ENCODE measurements at regions of chr16 and their contacts with region 1.

Region 1: DNA sequence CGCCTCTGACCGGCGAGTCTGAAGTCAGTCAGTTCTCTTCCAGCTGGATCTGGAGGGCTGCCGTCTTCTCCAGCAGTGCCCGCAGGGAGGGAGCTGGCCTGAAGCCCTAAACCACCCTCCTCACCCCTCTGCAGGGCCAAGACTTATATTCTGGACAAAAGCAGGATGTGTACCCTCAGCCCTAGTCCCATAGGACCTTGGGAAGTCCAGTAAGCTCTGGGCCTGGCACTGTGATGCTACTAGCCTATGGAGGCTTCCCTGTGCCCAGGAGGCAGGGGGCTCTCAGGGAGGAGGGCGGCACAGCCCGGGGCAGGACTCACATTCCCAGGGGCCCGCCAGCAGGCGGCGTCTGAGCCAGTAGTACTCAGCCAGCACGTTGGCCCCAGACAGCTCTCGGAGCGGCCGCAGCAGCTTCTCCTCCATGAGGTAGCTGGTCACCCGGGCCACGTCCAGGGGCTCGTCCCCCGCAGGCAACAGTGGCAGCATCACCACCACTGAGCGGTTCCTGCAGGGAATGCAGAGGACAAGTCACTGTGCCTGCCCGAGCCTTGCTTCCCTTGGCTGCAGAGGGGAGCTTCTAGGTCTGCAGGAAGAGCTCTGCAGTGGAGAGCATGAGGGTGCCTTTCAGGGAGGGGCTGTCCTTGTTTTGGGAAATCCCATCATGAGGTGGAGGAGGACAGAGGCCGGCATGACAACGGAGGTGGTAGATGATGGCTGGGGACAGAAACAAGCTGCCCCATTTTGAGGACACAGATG is 41.7 kb downstream of the RMI2 start:
- DNase-seq: no peak

Region 2: GRCh38 chr16:11328172-11329070 is 58.5 kb before region 1 on chr16:
- intact Hi-C with region 1: loop called (anchors 10 kb)
- DNase-seq: no peak

Region 3: GRCh38 chr16:11345040-11345862 is 41.7 kb before region 1 on chr16 and contains the start of gene RMI2:
- intact Hi-C with region 1: no loop called
- DNase-seq: peak; percentile 98
- total RNA-seq, gene RMI2: 0.43 TPM

Region 4: GRCh38 chr16:11431915-11432465 is 45.0 kb after region 1 on chr16:
- intact Hi-C with region 1: no loop called
- DNase-seq: no peak

Region 5: GRCh38 chr16:11484691-11485258 is 97.8 kb after region 1 on chr16:
- intact Hi-C with region 1: no loop called
- DNase-seq: no peak

Measured in cardiac septum (tissue), 1 donor.